Vagina (tissue), 2 donors: ENCODE measurements at regions of chr6 and their contacts with region 1.

Region 1: DNA sequence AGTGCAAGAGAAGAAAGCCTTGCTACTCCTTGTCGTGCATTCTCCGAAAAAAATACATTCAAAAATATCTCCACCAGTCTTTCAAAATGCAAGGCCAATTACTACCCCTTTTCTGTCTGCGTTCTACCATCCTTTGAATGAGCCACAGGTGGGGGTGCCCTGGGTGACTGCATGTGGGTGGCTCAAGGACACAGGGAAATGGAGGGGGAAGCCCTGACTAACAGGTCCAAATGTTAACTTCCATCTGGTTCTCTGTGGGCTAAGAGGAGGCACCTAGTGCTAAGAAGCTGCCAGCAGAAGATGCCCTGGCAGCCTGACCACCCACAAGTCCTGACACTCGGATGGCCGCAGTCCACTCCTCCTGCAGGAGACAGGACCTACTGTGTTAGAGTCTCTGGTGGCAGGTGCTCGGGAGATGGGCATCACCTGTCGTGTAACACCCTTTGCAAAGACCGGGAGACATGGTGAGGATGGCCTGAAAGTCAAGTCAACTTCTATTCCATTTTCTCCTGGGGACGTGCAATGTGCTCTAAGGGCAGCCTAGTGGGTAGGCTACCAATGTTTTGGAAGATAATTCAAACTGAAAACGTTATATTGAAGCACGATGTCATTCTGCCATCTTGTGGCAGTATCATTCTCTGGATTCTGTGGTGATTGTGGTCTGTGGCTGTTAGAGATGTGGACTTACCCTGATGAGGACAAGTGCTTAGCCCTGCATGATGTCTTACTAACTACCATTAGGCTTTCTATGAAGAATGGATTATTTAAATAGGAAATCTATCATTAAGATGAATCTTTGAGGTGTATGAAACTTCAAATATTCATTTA is 27.4 kb upstream of the IGF2R start:
- DNase-seq: no peak
- H3K4me3 ChIP-seq: no peak overlapping the region
- H3K27ac ChIP-seq: no peak overlapping the region
- H3K4me1 ChIP-seq: peaks cover 13% of the 10 kb centered on the region
- H3K27me3 ChIP-seq: no peaks in the 10 kb centered on the region
- CTCF ChIP-seq: peak in 2 of 3 experiments; percentile 7 to 52
- POLR2A ChIP-seq: no peak

Region 2: DNA sequence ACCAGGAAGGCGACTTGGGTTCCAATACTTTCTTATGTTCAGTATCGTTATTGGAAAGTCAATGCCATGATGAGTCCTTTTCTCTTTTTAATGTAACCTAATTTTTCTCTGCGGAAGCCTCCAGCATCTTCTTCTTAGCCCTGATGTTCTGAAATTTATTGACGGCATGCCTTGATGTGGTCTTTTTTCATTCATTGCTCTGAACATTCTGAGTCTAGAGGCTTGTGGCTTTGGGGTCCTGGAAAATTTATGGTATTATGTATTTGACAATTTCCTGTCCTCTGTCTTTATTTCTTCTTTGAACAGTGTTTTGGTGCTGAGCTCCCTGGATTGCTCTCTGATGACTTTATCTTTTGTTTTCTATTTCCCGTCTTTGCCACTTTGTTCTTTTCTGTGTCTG is 79.4 kb before region 1 on chr6:
- intact Hi-C with region 1: loop called (anchors 5 kb)
- DNase-seq: no peak
- H3K4me3 ChIP-seq: no peak overlapping the region
- H3K27ac ChIP-seq: no peak overlapping the region
- H3K4me1 ChIP-seq: no peaks in the 10 kb centered on the region
- H3K27me3 ChIP-seq: no peaks in the 10 kb centered on the region
- CTCF ChIP-seq: no peak
- POLR2A ChIP-seq: no peak

Region 3: GRCh38 chr6:159880412-159880975 is 61.0 kb before region 1 on chr6:
- intact Hi-C with region 1: no loop called
- DNase-seq: peak in 1 of 2 donors; percentile 11
- H3K4me3 ChIP-seq: no peak overlapping the region
- H3K27ac ChIP-seq: no peak overlapping the region
- H3K4me1 ChIP-seq: no peaks in the 10 kb centered on the region
- H3K27me3 ChIP-seq: no peaks in the 10 kb centered on the region
- CTCF ChIP-seq: no peak
- POLR2A ChIP-seq: no peak